Motor neuron (in vitro differentiated cells): ENCODE measurements at regions of chr15 and their contacts with region 1.

Region 1: DNA sequence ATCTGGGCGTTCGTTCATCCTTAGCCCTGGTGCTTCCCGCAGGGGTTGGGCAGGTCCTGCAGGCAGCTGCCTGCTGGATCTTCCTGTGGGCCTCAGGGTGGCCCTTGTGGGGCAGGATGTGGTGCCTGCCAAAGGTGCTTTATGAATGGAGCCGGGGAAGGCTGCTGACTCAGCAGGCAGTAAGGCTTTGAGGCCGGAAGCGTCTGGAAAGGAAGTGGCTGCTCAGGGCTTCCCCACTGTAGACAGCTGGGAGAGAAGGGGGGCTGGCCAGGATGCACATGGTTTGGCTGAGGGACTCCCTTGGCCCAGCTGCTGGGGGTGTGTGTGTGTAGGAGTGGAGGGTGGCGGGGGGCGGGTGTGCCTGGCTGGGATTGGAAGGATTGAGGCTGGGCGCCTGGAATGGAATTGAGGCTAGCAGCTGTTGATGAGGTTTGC is 12.9 kb downstream of the CD276 start:
- ATAC-seq: peak; percentile 70 to 91 (median 86)
- H3K4me3 ChIP-seq: no peak overlapping the region
- H3K27ac ChIP-seq: peak overlapping the region; percentile 24 to 36
- H3K4me1 ChIP-seq: peaks cover 9 to 10% of the 10 kb centered on the region in 2 donors

Region 2: DNA sequence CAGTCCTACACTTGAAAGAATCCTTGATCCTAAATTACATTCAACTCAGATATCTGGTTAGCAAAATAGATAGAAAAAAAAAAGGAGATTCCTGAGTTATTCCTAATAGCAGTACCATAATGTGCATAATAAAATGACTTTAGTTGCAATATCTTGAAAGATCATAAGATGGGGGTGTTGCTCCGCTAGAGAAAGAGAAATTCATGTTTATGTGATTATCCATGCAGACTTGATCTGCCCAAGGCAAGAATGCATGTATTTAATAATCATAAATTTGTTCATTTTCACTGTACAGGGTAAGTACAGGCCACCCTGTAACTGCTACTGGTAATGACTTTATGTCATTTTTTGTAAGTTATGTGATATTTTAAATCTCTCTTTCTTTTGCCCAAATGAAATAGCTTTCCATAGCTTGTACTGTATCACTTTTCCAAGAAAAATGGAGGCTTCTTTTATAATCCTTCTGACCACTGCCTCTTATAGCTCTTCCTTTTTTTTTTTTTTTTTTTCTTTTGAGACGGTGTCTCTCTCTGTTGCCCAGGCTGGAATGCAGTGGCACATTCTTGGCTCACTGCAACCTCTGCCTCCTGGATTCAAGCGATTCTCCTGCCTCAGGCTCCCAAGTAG is 412.8 kb before region 1 on chr15:
- in situ Hi-C with region 1: loop called in 1 of 9 experiments (anchors 25 kb)
- ATAC-seq: peak in 7 of 8 experiments; percentile 7 to 96 (median 70)
- H3K4me3 ChIP-seq: no peak overlapping the region
- H3K27ac ChIP-seq: no peak overlapping the region
- H3K4me1 ChIP-seq: peaks cover 0 to 7% of the 10 kb centered on the region in 2 donors

Region 3: DNA sequence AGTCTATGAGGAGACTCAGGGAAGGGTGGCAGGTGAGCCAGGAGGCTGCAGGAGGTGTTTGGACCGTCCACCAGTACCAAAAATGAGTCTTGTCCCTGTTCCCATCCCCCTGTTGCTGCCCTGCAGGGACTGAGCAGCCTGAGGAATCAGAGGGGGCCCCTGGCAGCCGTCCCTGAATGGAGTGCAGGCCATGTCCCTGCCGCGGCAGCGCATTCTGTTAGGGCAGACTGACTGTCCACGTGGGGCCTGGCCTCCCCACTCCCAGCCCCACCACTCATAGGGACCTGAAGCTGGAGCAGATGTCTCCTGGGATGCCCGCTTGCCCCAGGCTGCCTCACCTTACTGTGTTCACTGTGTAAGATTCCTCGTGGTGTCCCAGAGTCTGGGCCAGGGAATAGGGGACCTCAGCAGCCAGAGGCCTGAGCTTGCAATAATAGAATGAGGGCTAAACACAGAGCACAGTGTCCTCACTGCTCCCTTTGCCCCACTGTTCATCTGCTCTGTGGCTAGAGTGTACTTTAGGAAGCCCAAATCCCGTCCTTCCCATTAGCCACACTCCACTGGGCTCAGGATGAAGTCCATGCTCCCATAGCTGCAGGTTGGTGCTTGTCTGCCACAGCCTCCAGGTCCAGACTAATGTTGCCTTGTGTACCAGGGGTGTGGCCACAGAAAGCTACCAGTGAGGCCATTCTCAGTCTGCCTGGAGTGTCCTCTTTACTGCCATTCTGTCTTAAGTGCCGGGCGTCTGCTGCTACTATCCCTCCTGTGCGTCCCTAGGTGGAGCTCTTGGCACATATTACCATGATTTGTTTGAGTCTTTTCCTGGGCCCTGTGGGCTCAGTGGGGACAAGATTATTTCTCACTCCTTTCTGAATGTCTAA is 391.5 kb before region 1 on chr15:
- in situ Hi-C with region 1: loop called in 5 of 9 experiments (anchors 25 kb)
- ATAC-seq: peak; percentile 93 to 99 (median 96)
- H3K4me3 ChIP-seq: no peak overlapping the region
- H3K27ac ChIP-seq: no peak overlapping the region
- H3K4me1 ChIP-seq: peaks cover 2 to 3% of the 10 kb centered on the region in 2 donors

Region 4: GRCh38 chr15:73530649-73531048 is 166.4 kb before region 1 on chr15:
- in situ Hi-C with region 1: no loop called
- ATAC-seq: no peak
- H3K4me3 ChIP-seq: no peak overlapping the region
- H3K27ac ChIP-seq: no peak overlapping the region
- H3K4me1 ChIP-seq: no peaks in the 10 kb centered on the region

Region 5: DNA sequence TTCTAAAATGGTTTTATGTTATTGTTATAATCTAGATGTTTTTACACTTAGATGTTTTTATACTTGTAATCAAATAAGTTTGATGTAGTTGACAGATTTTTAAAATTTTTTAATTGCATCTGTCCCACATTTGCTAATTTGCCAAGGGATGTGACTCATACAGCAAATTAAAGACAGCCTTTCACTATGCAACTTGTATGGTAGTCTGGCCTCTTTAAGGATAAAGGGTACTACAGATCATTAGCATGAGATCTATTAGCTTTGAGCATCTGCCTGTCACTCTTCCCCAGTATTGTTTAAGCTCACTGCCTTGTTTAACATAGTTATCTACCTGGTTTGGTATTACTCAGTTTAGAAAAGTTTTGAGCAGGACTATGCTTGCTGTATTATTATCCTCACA is 146.9 kb before region 1 on chr15:
- in situ Hi-C with region 1: loop called in 4 of 9 experiments (anchors 10 to 25 kb)
- ATAC-seq: peak in 1 of 8 experiments; percentile 56
- H3K4me3 ChIP-seq: no peak overlapping the region
- H3K27ac ChIP-seq: no peak overlapping the region
- H3K4me1 ChIP-seq: no peaks in the 10 kb centered on the region

Region 6: DNA sequence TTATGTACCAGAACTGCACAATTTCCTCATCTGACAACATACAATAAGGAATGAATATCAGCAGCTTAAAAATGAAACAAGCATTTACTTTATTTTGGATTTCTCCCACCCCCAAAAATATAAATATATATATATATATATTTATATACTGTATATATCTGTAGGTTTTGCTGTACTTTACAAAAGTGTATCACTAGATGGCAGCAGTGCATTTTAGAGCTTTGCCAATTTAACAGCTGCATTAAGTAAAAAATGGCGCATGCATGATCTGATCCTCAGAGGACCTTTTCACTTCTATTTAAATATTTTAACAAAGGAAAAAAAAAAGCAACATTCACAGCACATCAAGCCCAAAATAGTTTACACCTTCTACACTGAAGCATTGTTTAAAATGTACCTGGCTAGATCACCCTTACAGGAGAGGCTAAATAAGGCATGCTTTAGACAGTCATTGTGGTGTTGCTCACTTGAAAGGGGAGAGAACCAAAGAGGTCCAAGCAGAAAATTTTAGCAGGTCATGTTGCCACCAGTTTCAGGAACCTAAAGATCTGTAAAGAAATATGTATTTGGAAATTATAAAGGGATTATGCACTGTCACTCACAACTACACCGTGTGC is 136.4 kb before region 1 on chr15:
- in situ Hi-C with region 1: loop called in 4 of 9 experiments (anchors 10 to 25 kb)
- ATAC-seq: peak in 7 of 8 experiments; percentile 38 to 78 (median 61)
- H3K4me3 ChIP-seq: no peak overlapping the region
- H3K27ac ChIP-seq: no peak overlapping the region
- H3K4me1 ChIP-seq: peaks cover 0 to 8% of the 10 kb centered on the region in 2 donors

Region 7: DNA sequence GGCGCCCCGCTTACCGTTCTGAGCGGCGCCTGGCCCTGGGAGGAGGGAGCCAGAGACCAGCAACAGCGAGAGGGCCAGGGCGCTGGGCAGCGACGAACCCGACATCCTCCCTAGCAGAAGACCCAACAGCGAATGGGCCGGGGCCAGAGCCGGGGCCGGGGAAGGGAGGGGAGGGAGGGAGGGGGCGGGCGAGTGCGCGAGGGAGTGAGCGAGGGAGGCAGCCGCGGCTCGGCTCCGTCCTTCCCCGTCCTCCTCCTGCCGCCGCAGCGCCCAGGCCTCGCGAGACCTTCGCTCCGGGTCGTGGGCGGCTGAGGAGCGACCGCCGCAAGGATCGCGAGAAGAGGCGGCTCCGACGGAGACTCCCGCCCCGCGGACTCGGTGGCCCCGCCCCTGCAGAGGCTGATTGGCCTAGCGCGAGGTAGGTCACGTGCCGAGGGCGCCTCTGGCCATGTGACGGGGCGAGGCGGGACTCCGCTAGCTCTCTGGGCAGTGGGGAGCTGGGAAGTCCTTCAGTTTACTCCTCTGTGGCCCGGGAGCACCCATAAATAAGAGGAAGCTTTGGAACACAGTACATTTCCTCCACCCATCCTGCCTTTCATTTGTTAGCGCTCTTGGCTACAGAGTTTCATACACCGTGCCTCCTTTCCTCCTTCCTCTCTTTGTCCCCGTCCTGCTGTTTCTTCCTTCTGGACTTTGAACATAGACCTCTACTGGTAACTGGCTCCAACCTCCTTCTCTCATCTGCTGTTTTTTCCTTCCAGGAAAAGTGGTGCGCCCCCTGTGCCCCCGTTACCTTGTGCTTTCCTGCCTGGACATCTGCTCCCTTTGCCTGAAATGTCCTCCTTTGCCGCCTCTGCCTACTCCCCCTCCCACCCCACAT is 63.7 kb before region 1 on chr15 and contains the start of gene NPTN:
- in situ Hi-C with region 1: loop called in 1 of 9 experiments (anchors 5 kb)
- ATAC-seq: peak; percentile 81 to 96 (median 94)
- H3K4me3 ChIP-seq: peak within 1 kb of the TSS; percentile 82 to 98 (median 86)
- H3K27ac ChIP-seq: peak within 1 kb of the TSS; percentile 87 to 92
- H3K4me1 ChIP-seq: peaks cover 17 to 35% of the 10 kb centered on the region in 2 donors
- total RNA-seq, gene NPTN: 41.8 to 134 (median 70.4) TPM

Region 8: GRCh38 chr15:73908030-73908821 is 211.2 kb after region 1 on chr15:
- in situ Hi-C with region 1: loop called in 1 of 9 experiments (anchors 25 kb)
- ATAC-seq: peak; percentile 78 to 100 (median 99)
- H3K4me3 ChIP-seq: no peak overlapping the region
- H3K27ac ChIP-seq: no peak overlapping the region
- H3K4me1 ChIP-seq: peaks cover 0 to 2% of the 10 kb centered on the region in 2 donors